Mammary epithelial cell (primary cell): ENCODE measurements at regions of chr14 and their contacts with region 1.

Region 1: GRCh38 chr14:74860906-74861733 is 14.8 kb downstream of the PROX2 start:
- DNase-seq: peak; percentile 69
- H3K4me3 ChIP-seq: no peak overlapping the region
- H3K27ac ChIP-seq: no peak overlapping the region
- H3K4me1 ChIP-seq: peaks cover 3% of the 10 kb centered on the region
- H3K27me3 ChIP-seq: no peaks in the 10 kb centered on the region
- CTCF ChIP-seq: peak; percentile 85 to 89

Region 2: GRCh38 chr14:74223016-74223415 is 638.1 kb before region 1 on chr14:
- CTCF ChIA-PET with region 1: no interaction called
- dilution Hi-C with region 1: no loop called
- in situ Hi-C with region 1: no loop called
- intact Hi-C with region 1: no loop called
- DNase-seq: no peak
- H3K4me3 ChIP-seq: no peak overlapping the region
- H3K27ac ChIP-seq: no peak overlapping the region
- H3K4me1 ChIP-seq: no peaks in the 10 kb centered on the region
- H3K27me3 ChIP-seq: peaks cover 5% of the 10 kb centered on the region
- CTCF ChIP-seq: no peak

Region 3: DNA sequence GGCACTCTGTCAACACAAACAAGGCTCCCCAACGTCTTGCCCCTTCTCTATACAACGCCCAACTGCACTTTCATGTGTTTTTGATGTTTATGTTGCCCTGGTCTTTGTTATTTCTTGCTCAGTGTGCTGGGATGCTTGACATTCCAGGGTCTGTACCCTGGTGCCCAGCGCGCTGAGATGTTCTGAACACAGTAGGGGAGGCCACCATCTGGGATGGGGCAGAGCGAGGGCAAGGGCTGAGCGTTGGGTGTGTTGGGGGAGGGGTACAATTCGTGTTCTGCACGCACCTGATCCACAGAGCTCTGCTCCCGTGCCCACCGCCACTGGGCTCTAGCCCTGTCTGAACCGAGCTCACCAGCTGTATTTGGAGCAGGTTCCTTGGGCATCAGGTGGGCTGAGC is 314.7 kb before region 1 on chr14:
- CTCF ChIA-PET with region 1: no interaction called
- dilution Hi-C with region 1: no loop called
- in situ Hi-C with region 1: no loop called
- intact Hi-C with region 1: no loop called
- DNase-seq: no peak
- H3K4me3 ChIP-seq: no peak overlapping the region
- H3K27ac ChIP-seq: no peak overlapping the region
- H3K4me1 ChIP-seq: peaks cover 4% of the 10 kb centered on the region
- H3K27me3 ChIP-seq: no peaks in the 10 kb centered on the region
- CTCF ChIP-seq: no peak

Region 4: GRCh38 chr14:74881431-74882361 is 20.6 kb after region 1 on chr14 and contains the start of gene DLST:
- CTCF ChIA-PET with region 1: interaction called, 14 read pairs
- dilution Hi-C with region 1: no loop called
- in situ Hi-C with region 1: no loop called
- intact Hi-C with region 1: no loop called
- DNase-seq: peak; percentile 80
- H3K4me3 ChIP-seq: peak within 1 kb of the TSS; percentile 90 to 99 (median 94)
- H3K27ac ChIP-seq: peak within 1 kb of the TSS; percentile 92
- H3K4me1 ChIP-seq: peaks cover 47% of the 10 kb centered on the region
- H3K27me3 ChIP-seq: no peaks in the 10 kb centered on the region
- CTCF ChIP-seq: no peak
- total RNA-seq, gene DLST: 63.3 to 145 TPM

Region 5: GRCh38 chr14:74905375-74906142 is 44.4 kb after region 1 on chr14:
- CTCF ChIA-PET with region 1: interaction called, 24 read pairs
- dilution Hi-C with region 1: loop called (anchors 5 kb)
- in situ Hi-C with region 1: no loop called
- intact Hi-C with region 1: loop called (anchors 1 kb)
- DNase-seq: peak; percentile 20
- H3K4me3 ChIP-seq: no peak overlapping the region
- H3K27ac ChIP-seq: no peak overlapping the region
- H3K4me1 ChIP-seq: no peaks in the 10 kb centered on the region
- H3K27me3 ChIP-seq: no peaks in the 10 kb centered on the region
- CTCF ChIP-seq: peak; percentile 88 to 96

Region 6: DNA sequence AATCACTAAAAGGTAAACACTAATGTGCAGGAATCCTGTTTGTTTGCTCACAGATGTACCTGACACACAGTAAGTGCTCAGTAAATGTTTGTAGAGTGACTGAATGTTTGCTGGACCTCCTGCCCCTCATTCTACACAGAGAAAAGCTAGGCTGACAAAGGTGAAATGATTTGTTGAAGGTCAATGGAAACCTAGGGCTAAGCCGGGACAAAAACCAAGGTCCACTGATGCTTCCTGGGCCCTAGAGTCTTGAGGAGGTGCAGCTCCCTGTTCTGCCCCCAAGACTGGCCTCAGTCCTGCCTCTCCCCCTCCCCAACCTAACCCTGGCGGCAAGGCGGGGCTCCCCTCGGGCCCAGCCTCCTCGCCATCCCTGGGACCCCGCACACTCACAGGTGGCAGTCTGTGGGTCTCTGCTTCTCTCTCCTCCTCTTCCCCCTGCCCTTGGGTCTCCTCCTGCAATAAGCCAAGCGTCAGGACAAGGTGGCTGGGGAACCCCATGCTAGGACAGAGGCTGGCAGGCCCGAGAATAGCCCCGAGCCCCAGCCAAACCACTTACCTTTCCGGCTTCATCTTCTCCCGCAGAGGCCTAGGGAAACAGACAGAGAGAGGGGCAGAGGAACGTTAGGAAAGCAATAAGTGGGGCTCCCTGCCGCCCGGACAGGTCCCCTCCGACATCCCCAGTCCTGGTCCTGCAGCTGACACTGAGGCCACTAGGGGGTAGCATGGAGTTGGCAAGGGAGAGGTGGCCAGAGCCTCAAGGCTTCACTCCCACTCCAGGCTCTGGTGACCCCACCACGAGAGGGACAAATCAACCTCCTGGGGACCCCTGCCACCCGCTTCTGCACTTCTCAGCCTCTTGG is 84.9 kb after region 1 on chr14:
- CTCF ChIA-PET with region 1: interaction called, 7 read pairs
- dilution Hi-C with region 1: no loop called
- in situ Hi-C with region 1: no loop called
- intact Hi-C with region 1: loop called (anchors 1 kb)
- DNase-seq: peak; percentile 41
- H3K4me3 ChIP-seq: no peak overlapping the region
- H3K27ac ChIP-seq: no peak overlapping the region
- H3K4me1 ChIP-seq: peaks cover 45% of the 10 kb centered on the region
- H3K27me3 ChIP-seq: no peaks in the 10 kb centered on the region
- CTCF ChIP-seq: peak; percentile 90 to 91

Region 7: GRCh38 chr14:74964787-74965485 is 103.8 kb after region 1 on chr14:
- CTCF ChIA-PET with region 1: no interaction called
- dilution Hi-C with region 1: loop called (anchors 5 kb)
- in situ Hi-C with region 1: no loop called
- intact Hi-C with region 1: no loop called
- DNase-seq: no peak
- H3K4me3 ChIP-seq: no peak overlapping the region
- H3K27ac ChIP-seq: no peak overlapping the region
- H3K4me1 ChIP-seq: peaks cover 40% of the 10 kb centered on the region
- H3K27me3 ChIP-seq: no peaks in the 10 kb centered on the region
- CTCF ChIP-seq: no peak

Region 8: GRCh38 chr14:75088574-75089373 is 227.7 kb after region 1 on chr14:
- CTCF ChIA-PET with region 1: no interaction called
- dilution Hi-C with region 1: no loop called
- in situ Hi-C with region 1: no loop called
- intact Hi-C with region 1: loop called (anchors 1 kb)
- DNase-seq: peak; percentile 52
- H3K4me3 ChIP-seq: no peak overlapping the region
- H3K27ac ChIP-seq: no peak overlapping the region
- H3K4me1 ChIP-seq: peaks cover 3% of the 10 kb centered on the region
- H3K27me3 ChIP-seq: no peaks in the 10 kb centered on the region
- CTCF ChIP-seq: peak; percentile 77 to 82